ENCODE measurements at regions of chr5 and their contacts with region 1.

Region 1: GRCh38 chr5:141186897-141187512 is at the start of gene PCDHB9:
- H3K4me3 ChIP-seq: no peak within 1 kb of the TSS
- H3K27ac ChIP-seq: no peak within 1 kb of the TSS
- H3K4me1 ChIP-seq: no peaks in the 10 kb centered on the region
- CTCF ChIP-seq: no peak

Region 2: DNA sequence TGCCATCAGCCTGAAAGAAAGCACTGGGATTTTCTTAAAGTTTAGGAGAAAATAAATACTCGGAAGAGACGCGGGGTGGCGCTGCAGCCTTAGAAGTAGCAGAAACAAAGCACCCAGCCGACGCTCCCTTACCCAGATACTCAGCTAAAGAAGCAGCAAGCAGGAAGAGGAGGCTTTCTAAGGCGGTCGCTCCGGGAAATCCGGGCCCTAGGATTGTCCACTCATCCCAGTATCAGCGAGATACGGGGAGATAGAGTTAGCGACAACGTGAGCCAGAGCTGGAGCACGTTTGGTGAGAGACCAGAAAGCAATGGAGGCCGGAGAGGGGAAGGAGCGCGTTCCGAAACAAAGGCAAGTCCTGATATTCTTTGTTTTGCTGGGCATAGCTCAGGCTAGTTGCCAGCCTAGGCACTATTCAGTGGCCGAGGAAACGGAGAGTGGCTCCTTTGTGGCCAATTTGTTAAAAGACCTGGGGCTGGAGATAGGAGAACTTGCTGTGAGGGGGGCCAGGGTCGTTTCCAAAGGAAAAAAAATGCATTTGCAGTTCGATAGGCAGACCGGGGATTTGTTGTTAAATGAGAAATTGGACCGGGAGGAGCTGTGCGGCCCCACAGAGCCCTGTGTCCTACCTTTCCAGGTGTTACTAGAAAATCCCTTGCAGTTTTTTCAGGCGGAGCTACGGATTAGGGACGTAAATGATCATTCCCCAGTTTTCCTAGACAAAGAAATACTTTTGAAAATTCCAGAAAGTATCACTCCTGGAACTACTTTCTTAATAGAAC is 92.3 kb before region 1 on chr5 and contains the start of gene PCDHB2:
- CTCF ChIA-PET with region 1: interaction called, 12 read pairs
- POLR2A ChIA-PET with region 1: no interaction called
- H3K4me3 ChIP-seq: peak within 1 kb of the TSS; percentile 55
- H3K27ac ChIP-seq: no peak within 1 kb of the TSS
- H3K4me1 ChIP-seq: no peaks in the 10 kb centered on the region
- CTCF ChIP-seq: no peak

Region 3: DNA sequence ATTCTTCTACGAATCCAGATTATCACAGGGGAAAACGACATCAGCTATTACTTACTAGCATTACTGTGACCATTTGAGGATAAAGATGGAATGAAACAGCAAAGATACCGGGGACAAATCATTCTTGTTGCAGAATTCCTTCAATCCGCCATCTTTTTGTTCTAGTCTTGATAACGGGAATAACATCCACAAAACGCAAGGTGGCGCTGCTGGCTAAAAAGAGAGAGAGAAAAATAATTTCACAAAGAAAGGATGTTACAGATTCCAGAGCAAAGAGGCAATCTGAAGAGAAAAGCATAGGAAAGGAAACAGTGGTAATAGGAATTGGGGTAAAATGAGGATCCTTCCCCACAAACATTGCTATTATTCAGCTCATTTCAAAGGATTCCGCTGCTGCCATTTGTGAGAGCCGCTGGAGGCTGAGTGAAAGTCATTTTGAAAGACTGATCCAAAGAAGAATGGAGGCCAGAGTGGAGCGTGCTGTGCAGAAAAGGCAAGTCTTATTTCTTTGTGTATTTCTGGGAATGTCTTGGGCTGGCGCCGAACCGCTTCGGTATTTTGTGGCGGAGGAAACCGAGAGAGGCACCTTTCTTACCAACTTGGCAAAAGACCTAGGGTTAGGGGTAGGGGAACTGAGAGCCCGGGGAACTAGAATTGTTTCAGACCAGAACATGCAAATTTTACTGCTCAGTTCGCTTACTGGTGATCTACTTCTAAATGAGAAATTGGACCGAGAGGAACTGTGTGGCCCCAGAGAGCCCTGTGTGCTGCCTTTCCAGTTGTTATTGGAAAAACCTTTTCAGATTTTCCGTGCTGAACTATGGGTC is 14.4 kb before region 1 on chr5 and contains the start of gene PCDHB7:
- CTCF ChIA-PET with region 1: interaction called, 20 read pairs
- POLR2A ChIA-PET with region 1: no interaction called
- H3K4me3 ChIP-seq: no peak within 1 kb of the TSS
- H3K27ac ChIP-seq: no peak within 1 kb of the TSS
- H3K4me1 ChIP-seq: no peaks in the 10 kb centered on the region
- CTCF ChIP-seq: no peak

Region 4: GRCh38 chr5:141199359-141200235 is 12.6 kb after region 1 on chr5 and contains the start of gene PCDHB11:
- CTCF ChIA-PET with region 1: interaction called, 12 read pairs
- POLR2A ChIA-PET with region 1: no interaction called
- H3K4me3 ChIP-seq: peak within 1 kb of the TSS; percentile 28
- H3K27ac ChIP-seq: no peak within 1 kb of the TSS
- H3K4me1 ChIP-seq: no peaks in the 10 kb centered on the region
- CTCF ChIP-seq: no peak

Measured in HEK293 (cell line).